Endothelial cell of umbilical vein (primary cell): ENCODE measurements at regions of chr1 and their contacts with region 1.

Region 1: GRCh38 chr1:213987927-213988506 is at the start of gene PROX1:
- DNase-seq: no peak
- H3K4me3 ChIP-seq: peak within 1 kb of the TSS; percentile 45 to 91 (median 79)
- H3K27ac ChIP-seq: peak within 1 kb of the TSS; percentile 65
- H3K4me1 ChIP-seq: peaks cover 16% of the 10 kb centered on the region
- H3K27me3 ChIP-seq: peaks cover 33 to 42% of the 10 kb centered on the region in 2 experiments
- CTCF ChIP-seq: peak in 1 of 2 donors; percentile 0
- POLR2A ChIP-seq: peak; percentile 85
- total RNA-seq, gene PROX1: 3.3 and 4.0 TPM in 2 replicates

Region 2: GRCh38 chr1:213122514-213122929 is 865.5 kb before region 1 on chr1:
- CTCF ChIA-PET with region 1: interaction called, 3 read pairs
- POLR2A ChIA-PET with region 1: no interaction called
- dilution Hi-C with region 1: no loop called
- intact Hi-C with region 1: loop called (anchors 5 kb)
- DNase-seq: peak; percentile 66
- H3K4me3 ChIP-seq: no peak overlapping the region
- H3K27ac ChIP-seq: no peak overlapping the region
- H3K4me1 ChIP-seq: peaks cover 39% of the 10 kb centered on the region
- H3K27me3 ChIP-seq: no peaks in the 10 kb centered on the region
- CTCF ChIP-seq: peak; percentile 18 to 21
- POLR2A ChIP-seq: no peak

Region 3: GRCh38 chr1:213829780-213830179 is 158.2 kb before region 1 on chr1:
- CTCF ChIA-PET with region 1: no interaction called
- POLR2A ChIA-PET with region 1: no interaction called
- dilution Hi-C with region 1: no loop called
- intact Hi-C with region 1: no loop called
- DNase-seq: no peak
- H3K4me3 ChIP-seq: no peak overlapping the region
- H3K27ac ChIP-seq: no peak overlapping the region
- H3K4me1 ChIP-seq: no peaks in the 10 kb centered on the region
- H3K27me3 ChIP-seq: no peaks in the 10 kb centered on the region
- CTCF ChIP-seq: no peak
- POLR2A ChIP-seq: no peak

Region 4: DNA sequence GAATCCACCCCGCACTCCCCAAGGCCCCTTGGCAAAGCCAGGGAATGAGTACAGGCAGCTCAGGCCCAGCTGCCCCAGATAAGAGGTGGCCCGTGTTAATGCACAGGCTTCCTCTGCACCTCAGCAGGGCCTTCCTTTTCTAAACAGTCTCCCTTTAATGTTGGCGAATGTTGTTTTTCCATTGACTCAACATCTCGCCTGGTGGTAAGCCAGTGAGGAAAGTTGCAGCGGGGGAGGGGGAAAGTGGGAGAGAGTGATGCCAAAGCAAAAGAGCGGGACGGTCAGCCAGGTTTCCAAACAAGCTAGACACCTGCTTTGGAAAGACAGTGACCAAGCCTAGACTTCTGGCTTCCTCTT is 10.6 kb before region 1 on chr1:
- CTCF ChIA-PET with region 1: interaction called, 17 read pairs
- POLR2A ChIA-PET with region 1: interaction called, 25 read pairs
- dilution Hi-C with region 1: no loop called
- intact Hi-C with region 1: no loop called
- DNase-seq: peak; percentile 98
- H3K4me3 ChIP-seq: no peak overlapping the region
- H3K27ac ChIP-seq: peak overlapping the region; percentile 62
- H3K4me1 ChIP-seq: peaks cover 38% of the 10 kb centered on the region
- H3K27me3 ChIP-seq: peaks cover 0 to 2% of the 10 kb centered on the region in 2 experiments
- CTCF ChIP-seq: peak in 1 of 2 donors; percentile 17
- POLR2A ChIP-seq: peak; percentile 52

Region 5: GRCh38 chr1:214012418-214012817 is 24.4 kb after region 1 on chr1:
- CTCF ChIA-PET with region 1: no interaction called
- POLR2A ChIA-PET with region 1: no interaction called
- dilution Hi-C with region 1: no loop called
- intact Hi-C with region 1: no loop called
- DNase-seq: no peak
- H3K4me3 ChIP-seq: no peak overlapping the region
- H3K27ac ChIP-seq: no peak overlapping the region
- H3K4me1 ChIP-seq: no peaks in the 10 kb centered on the region
- H3K27me3 ChIP-seq: no peaks in the 10 kb centered on the region
- CTCF ChIP-seq: no peak
- POLR2A ChIP-seq: no peak

Region 6: GRCh38 chr1:214102907-214103306 is 114.9 kb after region 1 on chr1:
- CTCF ChIA-PET with region 1: no interaction called
- POLR2A ChIA-PET with region 1: interaction called, 3 read pairs
- dilution Hi-C with region 1: no loop called
- intact Hi-C with region 1: loop called (anchors 1 kb)
- DNase-seq: peak; percentile 91
- H3K4me3 ChIP-seq: no peak overlapping the region
- H3K27ac ChIP-seq: peak overlapping the region; percentile 76
- H3K4me1 ChIP-seq: peaks cover 25% of the 10 kb centered on the region
- H3K27me3 ChIP-seq: no peaks in the 10 kb centered on the region
- CTCF ChIP-seq: no peak
- POLR2A ChIP-seq: no peak

Region 7: DNA sequence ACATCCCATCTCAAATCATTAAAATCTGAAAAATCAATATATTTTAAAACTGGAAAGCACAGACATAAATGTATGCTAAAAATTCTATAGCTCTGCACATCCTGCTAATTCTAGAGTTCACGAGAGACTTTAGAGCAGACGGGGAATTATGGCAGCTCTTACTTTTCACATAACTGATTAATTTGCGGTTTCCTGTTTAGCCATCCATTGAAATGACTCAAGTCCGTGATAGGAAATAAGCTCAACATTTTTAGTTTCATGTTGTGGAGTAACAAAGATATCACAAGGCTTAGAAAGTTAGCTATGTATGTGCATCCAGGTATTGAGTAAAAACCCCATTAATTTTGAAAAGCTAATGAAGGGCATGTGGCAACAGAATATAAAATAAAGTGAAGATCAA is 416.1 kb after region 1 on chr1:
- CTCF ChIA-PET with region 1: no interaction called
- POLR2A ChIA-PET with region 1: no interaction called
- dilution Hi-C with region 1: no loop called
- intact Hi-C with region 1: no loop called
- DNase-seq: peak; percentile 90
- H3K4me3 ChIP-seq: peak overlapping the region in 1 of 3 experiments; percentile 39
- H3K27ac ChIP-seq: peak overlapping the region; percentile 99
- H3K4me1 ChIP-seq: peaks cover 35% of the 10 kb centered on the region
- H3K27me3 ChIP-seq: no peaks in the 10 kb centered on the region
- CTCF ChIP-seq: no peak
- POLR2A ChIP-seq: peak; percentile 53

Region 8: GRCh38 chr1:215566556-215567490 is 1578.8 kb after region 1 on chr1 and contains the start of gene KCTD3:
- CTCF ChIA-PET with region 1: no interaction called
- POLR2A ChIA-PET with region 1: no interaction called
- dilution Hi-C with region 1: no loop called
- intact Hi-C with region 1: loop called (anchors 5 kb)
- DNase-seq: peak; percentile 74
- H3K4me3 ChIP-seq: peak within 1 kb of the TSS; percentile 29 to 94 (median 85)
- H3K27ac ChIP-seq: peak within 1 kb of the TSS; percentile 91
- H3K4me1 ChIP-seq: peaks cover 20% of the 10 kb centered on the region
- H3K27me3 ChIP-seq: no peaks in the 10 kb centered on the region
- CTCF ChIP-seq: no peak
- POLR2A ChIP-seq: peak; percentile 63
- total RNA-seq, gene KCTD3: 28.3 and 31.1 TPM in 2 replicates